Spleen (tissue), 13 donors: ENCODE measurements at regions of chr9 and their contacts with region 1.

Region 1: GRCh38 chr9:85741875-85742629 is at the start of gene AGTPBP1:
- DNase-seq: peak; percentile 99
- H3K4me3 ChIP-seq: peak within 1 kb of the TSS; percentile 64 to 97 (median 86)
- H3K27ac ChIP-seq: peak within 1 kb of the TSS; percentile 69 to 99 (median 97)
- H3K4me1 ChIP-seq: peaks cover 10 to 57% (median 25%) of the 10 kb centered on the region in 6 donors
- H3K27me3 ChIP-seq: peaks cover 0 to 6% (median 0%) of the 10 kb centered on the region in 7 donors
- CTCF ChIP-seq: peak in 3 of 11 experiments; percentile 19 to 28 (median 25)
- POLR2A ChIP-seq: no peak
- total RNA-seq, gene AGTPBP1: 46.4 to 83.6 (median 53.3) TPM

Region 2: GRCh38 chr9:85559526-85559925 is 182.5 kb before region 1 on chr9:
- intact Hi-C with region 1: no loop called
- DNase-seq: no peak
- H3K4me3 ChIP-seq: no peak overlapping the region
- H3K27ac ChIP-seq: no peak overlapping the region
- H3K4me1 ChIP-seq: no peaks in the 10 kb centered on the region
- H3K27me3 ChIP-seq: no peaks in the 10 kb centered on the region
- CTCF ChIP-seq: no peak
- POLR2A ChIP-seq: no peak

Region 3: GRCh38 chr9:85685081-85685480 is 57.0 kb before region 1 on chr9:
- intact Hi-C with region 1: no loop called
- DNase-seq: no peak
- H3K4me3 ChIP-seq: no peak overlapping the region
- H3K27ac ChIP-seq: no peak overlapping the region
- H3K4me1 ChIP-seq: peaks cover 0 to 4% (median 0%) of the 10 kb centered on the region in 6 donors
- H3K27me3 ChIP-seq: no peaks in the 10 kb centered on the region
- CTCF ChIP-seq: no peak
- POLR2A ChIP-seq: no peak

Region 4: DNA sequence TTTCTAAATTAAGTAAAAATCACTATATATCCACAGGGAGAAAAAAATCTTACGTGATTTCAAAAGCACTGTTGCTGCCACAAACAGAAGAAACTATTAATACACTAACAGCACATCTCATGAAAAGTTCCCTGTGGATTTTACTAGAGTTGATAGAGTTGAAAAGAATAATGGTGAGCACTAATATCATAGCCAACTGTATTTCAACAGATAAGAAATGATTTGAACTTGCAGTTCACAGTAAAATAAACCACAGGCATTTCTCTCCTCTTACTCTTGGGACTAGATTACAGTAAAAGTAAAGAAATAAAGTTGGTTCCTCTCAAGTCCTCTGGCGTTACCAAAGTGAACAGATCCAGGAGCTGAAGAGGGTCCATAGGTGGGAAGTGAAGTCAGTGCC is 28.2 kb before region 1 on chr9:
- intact Hi-C with region 1: no loop called
- DNase-seq: no peak
- H3K4me3 ChIP-seq: no peak overlapping the region
- H3K27ac ChIP-seq: peak overlapping the region in 3 of 8 donors; percentile 36 to 89 (median 87)
- H3K4me1 ChIP-seq: peaks cover 0 to 52% (median 30%) of the 10 kb centered on the region in 6 donors
- H3K27me3 ChIP-seq: no peaks in the 10 kb centered on the region
- CTCF ChIP-seq: no peak
- POLR2A ChIP-seq: no peak

Region 5: GRCh38 chr9:85940832-85941621 is 199.0 kb after region 1 on chr9 and contains the start of gene NAA35:
- intact Hi-C with region 1: loop called (anchors 10 kb)
- DNase-seq: peak; percentile 99
- H3K4me3 ChIP-seq: peak within 1 kb of the TSS; percentile 75 to 97 (median 92)
- H3K27ac ChIP-seq: peak within 1 kb of the TSS; percentile 81 to 96 (median 93)
- H3K4me1 ChIP-seq: peaks cover 23 to 55% (median 40%) of the 10 kb centered on the region in 6 donors
- H3K27me3 ChIP-seq: no peaks in the 10 kb centered on the region
- CTCF ChIP-seq: peak in 5 of 11 experiments; percentile 22 to 56 (median 44)
- POLR2A ChIP-seq: peak in 2 of 3 donors; percentile 5 to 37
- total RNA-seq, gene NAA35: 10.6 to 23.7 (median 22.7) TPM

Region 6: GRCh38 chr9:86079865-86080469 is 337.9 kb after region 1 on chr9:
- intact Hi-C with region 1: no loop called
- DNase-seq: no peak
- H3K4me3 ChIP-seq: no peak overlapping the region
- H3K27ac ChIP-seq: no peak overlapping the region
- H3K4me1 ChIP-seq: no peaks in the 10 kb centered on the region
- H3K27me3 ChIP-seq: no peaks in the 10 kb centered on the region
- CTCF ChIP-seq: no peak
- POLR2A ChIP-seq: no peak